Activated naive CD4-positive, alpha-beta T cell treated with anti-CD3 and anti-CD28 coated beads for 36 hours (primary cell): ENCODE measurements at regions of chr5 and their contacts with region 1.

Region 1: GRCh38 chr5:16577677-16578076 is 39.1 kb downstream of the RETREG1 start:
- DNase-seq: peak; percentile 38
- H3K4me3 Mint-ChIP-seq: no peak overlapping the region
- H3K27ac Mint-ChIP-seq: peak overlapping the region; percentile 3
- H3K4me1 Mint-ChIP-seq: peaks cover 28% of the 10 kb centered on the region
- H3K27me3 Mint-ChIP-seq: no peaks in the 10 kb centered on the region

Region 2: DNA sequence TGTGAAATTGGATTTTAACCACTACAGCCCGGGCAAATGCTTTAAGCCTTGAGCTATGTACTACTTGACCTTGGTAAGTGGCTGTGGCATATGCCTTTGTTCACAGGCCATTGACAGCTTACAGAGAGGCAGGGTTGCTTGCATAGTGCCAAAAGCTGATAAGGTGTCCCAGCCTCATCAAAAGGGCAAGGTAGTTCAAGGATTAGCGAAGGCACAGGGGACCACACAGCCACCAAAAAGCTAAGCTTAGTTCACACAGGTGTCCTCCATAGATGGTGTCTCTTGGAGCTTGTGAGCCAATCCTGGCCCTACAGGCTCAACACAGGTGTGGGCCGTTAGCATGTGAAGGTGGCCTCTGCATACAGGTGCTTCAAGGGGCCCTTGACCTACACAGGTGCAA is 198.9 kb before region 1 on chr5:
- CTCF ChIA-PET with region 1: no interaction called
- intact Hi-C with region 1: no loop called
- DNase-seq: no peak
- H3K4me3 Mint-ChIP-seq: no peak overlapping the region
- H3K27ac Mint-ChIP-seq: no peak overlapping the region
- H3K4me1 Mint-ChIP-seq: no peaks in the 10 kb centered on the region
- H3K27me3 Mint-ChIP-seq: peaks cover 10% of the 10 kb centered on the region

Region 3: GRCh38 chr5:16593013-16593412 is 15.3 kb after region 1 on chr5:
- CTCF ChIA-PET with region 1: interaction called, 3 read pairs
- intact Hi-C with region 1: loop called (anchors 2 kb)
- DNase-seq: no peak
- H3K4me3 Mint-ChIP-seq: no peak overlapping the region
- H3K27ac Mint-ChIP-seq: no peak overlapping the region
- H3K4me1 Mint-ChIP-seq: peaks cover 59% of the 10 kb centered on the region
- H3K27me3 Mint-ChIP-seq: no peaks in the 10 kb centered on the region

Region 4: DNA sequence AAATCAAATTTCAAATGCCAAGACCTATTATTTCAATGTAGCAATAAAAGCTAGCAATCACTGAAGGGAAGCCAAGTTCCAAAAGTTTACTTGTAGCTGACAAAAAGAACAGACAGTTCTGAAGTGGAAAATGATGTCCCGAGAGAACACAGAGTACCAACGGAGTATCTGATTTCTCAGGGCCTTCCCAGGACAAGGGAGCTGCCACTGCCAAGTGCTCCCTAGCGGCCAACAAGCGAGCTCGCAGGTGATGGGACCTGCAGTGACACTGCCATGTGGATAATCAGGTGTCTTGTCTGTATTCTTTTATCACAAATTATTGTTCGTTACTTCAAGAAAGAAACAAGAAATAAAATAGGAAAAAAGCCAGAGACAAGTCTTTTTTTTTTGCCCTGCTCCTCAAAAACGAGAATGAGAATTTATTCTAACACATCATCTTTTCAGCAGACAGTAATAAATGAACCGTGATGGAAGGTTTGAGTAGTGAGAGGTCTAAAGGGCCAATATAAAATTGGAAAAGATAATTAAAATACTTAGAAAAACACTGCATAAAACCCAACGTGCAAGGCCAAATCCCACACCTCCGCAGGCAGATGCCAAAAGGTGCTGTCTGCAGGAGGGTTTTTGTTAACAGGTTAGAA is 199.1 kb after region 1 on chr5:
- CTCF ChIA-PET with region 1: no interaction called
- intact Hi-C with region 1: no loop called
- DNase-seq: no peak
- H3K4me3 Mint-ChIP-seq: no peak overlapping the region
- H3K27ac Mint-ChIP-seq: no peak overlapping the region
- H3K4me1 Mint-ChIP-seq: no peaks in the 10 kb centered on the region
- H3K27me3 Mint-ChIP-seq: no peaks in the 10 kb centered on the region

Region 5: DNA sequence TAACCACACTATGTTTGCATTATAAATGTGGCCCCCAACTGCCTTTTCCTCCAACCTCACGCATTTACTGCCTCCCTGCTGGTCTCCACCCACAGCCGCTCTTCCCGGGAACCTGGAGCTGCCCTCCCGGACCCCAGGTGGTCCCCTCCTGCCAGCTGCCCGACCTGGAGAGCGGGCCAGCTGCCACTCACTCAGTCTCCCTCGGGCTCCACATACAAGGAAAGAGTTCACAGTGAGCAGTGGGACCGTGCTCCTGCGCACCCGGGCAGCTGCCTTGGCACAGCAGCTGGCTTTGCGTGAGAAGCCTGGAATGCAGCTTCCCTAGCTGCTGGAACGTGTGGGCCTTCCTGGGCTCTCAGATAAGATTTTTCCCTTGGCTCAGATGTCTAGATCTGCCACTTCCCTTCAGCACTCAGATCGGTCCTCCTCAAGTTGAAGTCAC is 289.1 kb after region 1 on chr5:
- CTCF ChIA-PET with region 1: no interaction called
- intact Hi-C with region 1: no loop called
- DNase-seq: no peak
- H3K4me3 Mint-ChIP-seq: no peak overlapping the region
- H3K27ac Mint-ChIP-seq: no peak overlapping the region
- H3K4me1 Mint-ChIP-seq: no peaks in the 10 kb centered on the region
- H3K27me3 Mint-ChIP-seq: no peaks in the 10 kb centered on the region